ENCODE measurements at regions of chr2 and their contacts with region 1.

Region 1: GRCh38 chr2:158943973-158944372 is 24.5 kb upstream of the TANC1 start:
- DNase-seq: no peak
- H3K4me3 Mint-ChIP-seq: no peak overlapping the region
- H3K27ac Mint-ChIP-seq: no peak overlapping the region
- H3K4me1 Mint-ChIP-seq: peaks cover 6% of the 10 kb centered on the region
- H3K27me3 Mint-ChIP-seq: no peaks in the 10 kb centered on the region
- CTCF ChIP-seq: no peak

Region 2: DNA sequence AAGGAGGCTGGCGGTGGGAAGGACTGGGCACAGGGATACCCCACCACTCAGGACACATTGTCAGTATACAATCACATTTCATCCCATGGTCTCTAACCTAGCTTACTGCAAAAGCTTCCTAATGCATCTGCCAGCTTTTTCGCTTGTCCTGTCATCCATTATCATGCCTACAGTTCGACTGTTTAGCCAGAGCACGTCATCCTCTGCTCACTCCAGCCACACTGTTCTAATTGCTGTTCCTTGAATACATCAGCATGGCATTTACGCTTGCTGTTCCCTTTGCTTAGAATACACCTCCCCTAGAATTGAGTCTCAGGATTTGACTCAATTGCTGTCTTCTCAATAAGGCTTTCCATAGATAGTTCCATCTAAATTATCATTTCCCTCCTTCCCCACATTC is 653.7 kb before region 1 on chr2:
- CTCF ChIA-PET with region 1: no interaction called
- POLR2A ChIA-PET with region 1: no interaction called
- intact Hi-C with region 1: no loop called
- DNase-seq: no peak
- H3K4me3 Mint-ChIP-seq: no peak overlapping the region
- H3K27ac Mint-ChIP-seq: no peak overlapping the region
- H3K4me1 Mint-ChIP-seq: no peaks in the 10 kb centered on the region
- H3K27me3 Mint-ChIP-seq: peaks cover 11% of the 10 kb centered on the region
- CTCF ChIP-seq: no peak

Region 3: GRCh38 chr2:158953926-158954763 is 10.2 kb after region 1 on chr2:
- CTCF ChIA-PET with region 1: interaction called, 13 read pairs
- POLR2A ChIA-PET with region 1: interaction called, 6 read pairs
- intact Hi-C with region 1: no loop called
- DNase-seq: peak; percentile 93
- H3K4me3 Mint-ChIP-seq: peak overlapping the region; percentile 7
- H3K27ac Mint-ChIP-seq: peak overlapping the region; percentile 75
- H3K4me1 Mint-ChIP-seq: peaks cover 14% of the 10 kb centered on the region
- H3K27me3 Mint-ChIP-seq: no peaks in the 10 kb centered on the region
- CTCF ChIP-seq: no peak